Colonic mucosa (tissue), 4 donors: ENCODE measurements at regions of chr17 and their contacts with region 1.

Region 1: GRCh38 chr17:9959377-9959981 is 54.4 kb upstream of the RCVRN start:
- DNase-seq: peak; percentile 40
- H3K4me3 ChIP-seq: no peak overlapping the region
- H3K27ac ChIP-seq: no peak overlapping the region
- H3K4me1 ChIP-seq: no peaks in the 10 kb centered on the region
- H3K27me3 ChIP-seq: no peaks in the 10 kb centered on the region
- CTCF ChIP-seq: peak; percentile 21

Region 2: GRCh38 chr17:9982159-9982558 is 22.7 kb after region 1 on chr17:
- intact Hi-C with region 1: loop called (anchors 2 kb)
- DNase-seq: no peak
- H3K4me3 ChIP-seq: no peak overlapping the region
- H3K27ac ChIP-seq: no peak overlapping the region
- H3K4me1 ChIP-seq: no peaks in the 10 kb centered on the region
- H3K27me3 ChIP-seq: no peaks in the 10 kb centered on the region
- CTCF ChIP-seq: peak; percentile 10

Region 3: DNA sequence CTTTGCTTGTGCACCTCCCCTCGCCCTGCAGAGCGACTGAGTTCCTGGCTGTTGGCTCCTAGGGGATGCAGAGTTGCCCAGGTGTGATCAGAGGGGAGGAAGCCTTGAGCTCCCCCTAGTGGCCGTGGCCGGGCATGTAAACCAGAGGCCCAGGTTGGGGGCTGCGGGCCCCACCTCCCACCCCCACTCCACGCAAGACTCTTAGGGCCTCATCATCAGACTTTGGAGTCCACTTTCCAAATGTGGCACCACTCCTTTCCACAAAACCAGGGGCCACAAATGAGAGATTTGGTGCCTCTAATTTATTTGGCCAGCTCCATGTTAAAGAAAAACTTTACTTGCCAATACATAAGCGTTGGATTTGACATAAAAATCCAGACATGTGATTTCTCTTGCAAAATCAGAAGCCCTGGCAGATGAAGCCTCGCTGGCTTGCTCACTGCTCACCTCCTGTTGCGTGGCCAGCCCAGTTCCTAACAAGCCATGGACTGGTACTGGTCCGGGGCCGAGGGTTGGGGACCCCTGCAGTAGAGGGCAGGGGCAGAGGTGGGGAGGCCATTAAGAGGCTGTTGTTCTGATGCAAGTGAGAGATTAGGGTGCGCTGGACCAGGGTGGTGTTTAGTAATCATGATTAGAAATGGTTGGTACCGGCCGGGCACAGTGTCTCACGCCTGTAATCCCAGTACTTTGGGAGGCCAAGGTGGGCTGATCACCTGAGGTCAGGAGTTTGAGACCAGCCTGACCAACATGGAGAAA is 267.6 kb after region 1 on chr17:
- intact Hi-C with region 1: loop called (anchors 2 kb)
- DNase-seq: peak; percentile 45
- H3K4me3 ChIP-seq: no peak overlapping the region
- H3K27ac ChIP-seq: no peak overlapping the region
- H3K4me1 ChIP-seq: no peaks in the 10 kb centered on the region
- H3K27me3 ChIP-seq: no peaks in the 10 kb centered on the region
- CTCF ChIP-seq: peak; percentile 89